ENCODE measurements at regions of chr6 and their contacts with region 1.

Region 1: GRCh38 chr6:26031595-26032339 is 55.5 kb upstream of the HFE start:
- DNase-seq: peak; percentile 92
- ATAC-seq: peak; percentile 69
- H3K4me3 Mint-ChIP-seq: peak overlapping the region; percentile 81
- H3K27ac Mint-ChIP-seq: peak overlapping the region; percentile 98
- H3K4me1 Mint-ChIP-seq: peaks cover 50% of the 10 kb centered on the region
- H3K27me3 Mint-ChIP-seq: no peaks in the 10 kb centered on the region

Region 2: DNA sequence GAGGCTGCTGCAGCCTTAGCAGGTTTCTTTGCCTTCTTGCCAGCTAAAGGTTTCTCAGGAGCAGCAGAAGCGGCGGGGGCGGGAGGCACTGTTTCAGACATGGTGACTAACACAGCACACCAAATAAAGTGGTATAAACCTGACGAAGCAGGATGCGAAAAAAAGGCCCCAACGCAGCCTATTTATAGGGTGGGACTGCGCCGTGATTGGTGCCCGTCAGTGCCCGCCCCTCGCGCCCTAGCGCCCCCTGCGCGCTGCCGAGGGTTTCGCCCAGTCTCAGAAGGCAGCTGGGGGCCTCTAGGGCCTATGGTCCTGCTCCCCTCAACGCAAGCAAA is 14.2 kb before region 1 on chr6:
- CTCF ChIA-PET with region 1: interaction called, 31 read pairs
- POLR2A ChIA-PET with region 1: interaction called, 179 read pairs
- intact Hi-C with region 1: no loop called
- DNase-seq: peak; percentile 93
- ATAC-seq: peak; percentile 38
- H3K4me3 Mint-ChIP-seq: peak overlapping the region; percentile 72
- H3K27ac Mint-ChIP-seq: peak overlapping the region; percentile 85
- H3K4me1 Mint-ChIP-seq: peaks cover 32% of the 10 kb centered on the region
- H3K27me3 Mint-ChIP-seq: no peaks in the 10 kb centered on the region

Region 3: DNA sequence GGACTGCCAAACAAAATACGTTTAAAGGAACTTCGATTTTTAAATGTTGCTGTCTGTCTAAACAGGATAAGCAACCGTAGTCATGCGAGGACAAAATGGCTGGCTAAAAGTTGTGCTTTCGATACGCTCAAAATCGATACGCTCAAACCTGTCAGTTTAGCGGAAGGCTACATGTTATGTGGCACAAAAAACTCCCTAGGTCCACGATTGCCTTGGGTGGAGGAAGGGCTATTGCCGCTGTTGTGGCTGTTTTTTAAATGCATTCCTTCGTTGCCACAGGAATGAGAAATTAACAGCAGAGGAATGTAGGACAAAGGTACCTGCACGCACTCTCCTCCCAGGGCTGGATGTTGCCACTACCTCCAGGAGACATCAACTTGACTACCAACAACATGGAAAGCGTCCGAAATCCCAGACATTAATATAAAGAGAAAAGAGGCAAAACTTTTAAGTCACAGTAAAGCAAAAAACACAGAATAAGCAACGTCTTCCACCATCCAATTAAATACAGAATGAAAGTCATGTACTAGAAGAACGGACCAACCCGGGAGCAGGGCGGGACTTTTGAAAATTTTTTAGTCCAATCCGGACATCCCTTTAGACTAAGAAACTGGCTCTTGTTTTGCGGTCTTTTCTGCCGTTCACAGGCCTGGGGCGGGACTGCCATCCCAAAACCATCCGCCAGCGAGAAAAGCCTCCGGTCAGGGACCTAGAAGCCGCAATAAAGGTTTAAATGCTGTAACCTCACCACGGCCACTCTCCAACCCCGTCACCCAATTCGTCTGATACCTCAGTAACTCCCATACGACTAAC is 23.3 kb after region 1 on chr6:
- CTCF ChIA-PET with region 1: interaction called, 8 read pairs
- POLR2A ChIA-PET with region 1: interaction called, 50 read pairs
- intact Hi-C with region 1: loop called (anchors 1 kb)
- DNase-seq: peak; percentile 91
- ATAC-seq: peak; percentile 70
- H3K4me3 Mint-ChIP-seq: peak overlapping the region; percentile 96
- H3K27ac Mint-ChIP-seq: peak overlapping the region; percentile 99
- H3K4me1 Mint-ChIP-seq: peaks cover 13% of the 10 kb centered on the region
- H3K27me3 Mint-ChIP-seq: no peaks in the 10 kb centered on the region

Region 4: DNA sequence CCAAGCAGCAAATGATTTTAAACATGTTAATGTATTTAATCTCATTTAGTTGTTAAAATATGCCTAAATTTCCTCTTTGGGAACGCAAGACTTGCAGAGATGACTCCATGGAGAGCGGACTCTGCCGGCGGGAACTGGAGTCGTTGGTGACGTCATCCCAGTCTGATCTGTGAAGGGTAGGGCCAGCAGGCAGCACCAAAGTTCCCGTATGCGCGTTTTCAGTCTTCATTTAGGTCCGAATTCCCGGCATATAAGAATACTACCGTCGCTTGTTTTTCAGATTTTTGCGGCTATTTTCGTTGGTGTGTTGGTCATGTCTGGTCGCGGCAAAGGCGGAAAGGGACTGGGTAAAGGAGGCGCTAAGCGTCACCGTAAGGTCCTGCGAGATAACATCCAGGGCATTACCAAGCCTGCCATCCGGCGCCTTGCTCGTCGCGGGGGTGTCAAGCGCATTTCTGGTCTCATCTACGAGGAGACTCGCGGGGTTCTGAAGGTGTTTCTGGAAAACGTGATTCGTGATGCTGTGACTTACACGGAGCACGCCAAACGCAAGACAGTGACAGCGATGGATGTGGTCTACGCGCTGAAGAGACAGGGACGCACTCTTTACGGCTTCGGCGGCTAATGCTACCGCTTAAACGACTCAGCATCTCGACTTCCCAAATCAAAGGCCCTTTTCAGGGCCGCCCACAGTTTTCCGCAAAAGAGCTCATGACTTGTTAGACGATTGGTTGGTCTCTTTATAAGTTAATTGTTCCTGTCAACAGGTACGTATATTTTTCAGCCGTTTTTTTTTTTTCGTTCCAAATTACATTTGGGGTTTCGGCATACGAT is 172.8 kb after region 1 on chr6:
- CTCF ChIA-PET with region 1: no interaction called
- POLR2A ChIA-PET with region 1: interaction called, 22 read pairs
- intact Hi-C with region 1: loop called (anchors 2 kb)
- DNase-seq: peak; percentile 92
- ATAC-seq: peak; percentile 69
- H3K4me3 Mint-ChIP-seq: no peak overlapping the region
- H3K27ac Mint-ChIP-seq: no peak overlapping the region
- H3K4me1 Mint-ChIP-seq: peaks cover 20% of the 10 kb centered on the region
- H3K27me3 Mint-ChIP-seq: no peaks in the 10 kb centered on the region

Region 5: DNA sequence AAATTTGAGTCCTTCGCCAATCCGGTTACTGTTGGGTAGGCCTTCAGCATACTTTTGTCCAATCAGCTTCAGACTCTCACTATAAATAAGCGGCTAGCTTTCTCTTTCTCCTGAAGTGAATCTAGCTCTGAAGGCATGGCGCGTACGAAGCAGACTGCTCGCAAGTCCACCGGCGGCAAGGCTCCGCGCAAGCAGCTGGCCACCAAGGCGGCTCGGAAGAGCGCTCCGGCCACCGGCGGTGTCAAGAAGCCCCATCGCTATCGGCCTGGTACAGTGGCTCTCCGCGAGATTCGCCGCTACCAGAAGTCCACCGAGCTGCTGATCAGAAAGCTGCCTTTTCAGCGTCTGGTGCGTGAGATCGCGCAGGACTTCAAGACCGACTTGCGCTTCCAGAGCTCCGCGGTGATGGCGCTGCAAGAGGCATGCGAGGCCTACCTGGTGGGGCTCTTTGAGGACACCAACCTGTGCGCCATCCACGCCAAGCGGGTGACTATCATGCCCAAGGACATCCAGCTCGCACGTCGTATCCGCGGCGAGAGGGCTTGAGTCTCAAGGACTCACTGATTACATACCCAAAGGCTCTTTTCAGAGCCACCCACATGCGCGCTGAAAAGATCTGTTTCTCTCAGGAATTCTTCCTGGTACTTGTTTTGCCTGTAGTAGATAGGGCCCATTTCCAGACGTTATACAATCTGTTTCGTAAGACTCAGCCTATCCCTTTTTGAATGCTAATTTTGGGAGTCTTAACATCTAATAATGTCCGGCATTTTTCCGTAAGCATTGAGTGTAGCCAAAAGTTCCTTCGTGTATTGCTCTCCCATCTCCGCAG is 1778.4 kb after region 1 on chr6:
- CTCF ChIA-PET with region 1: no interaction called
- POLR2A ChIA-PET with region 1: no interaction called
- intact Hi-C with region 1: loop called in 1 of 2 experiments (anchors 5 kb)
- DNase-seq: peak; percentile 83
- ATAC-seq: peak; percentile 33
- H3K4me3 Mint-ChIP-seq: peak overlapping the region; percentile 86
- H3K27ac Mint-ChIP-seq: peak overlapping the region; percentile 95
- H3K4me1 Mint-ChIP-seq: peaks cover 49% of the 10 kb centered on the region
- H3K27me3 Mint-ChIP-seq: no peaks in the 10 kb centered on the region